ENCODE measurements at regions of chr9 and their contacts with region 1.

Region 1: GRCh38 chr9:76810377-76810957 is 46.2 kb downstream of the PCA3 start:
- DNase-seq: peak; percentile 61
- H3K4me3 ChIP-seq: no peak overlapping the region
- H3K27ac ChIP-seq: no peak overlapping the region
- H3K4me1 ChIP-seq: no peaks in the 10 kb centered on the region
- H3K27me3 ChIP-seq: no peaks in the 10 kb centered on the region
- CTCF ChIP-seq: peak; percentile 70 to 87 (median 71)
- POLR2A ChIP-seq: no peak

Region 2: GRCh38 chr9:76987594-76988200 is 177.2 kb after region 1 on chr9:
- intact Hi-C with region 1: loop called (anchors 10 kb)
- DNase-seq: peak; percentile 41
- H3K4me3 ChIP-seq: no peak overlapping the region
- H3K27ac ChIP-seq: no peak overlapping the region
- H3K4me1 ChIP-seq: peaks cover 5% of the 10 kb centered on the region
- H3K27me3 ChIP-seq: no peaks in the 10 kb centered on the region
- CTCF ChIP-seq: peak in 1 of 3 experiments; percentile 29
- POLR2A ChIP-seq: no peak

Region 3: DNA sequence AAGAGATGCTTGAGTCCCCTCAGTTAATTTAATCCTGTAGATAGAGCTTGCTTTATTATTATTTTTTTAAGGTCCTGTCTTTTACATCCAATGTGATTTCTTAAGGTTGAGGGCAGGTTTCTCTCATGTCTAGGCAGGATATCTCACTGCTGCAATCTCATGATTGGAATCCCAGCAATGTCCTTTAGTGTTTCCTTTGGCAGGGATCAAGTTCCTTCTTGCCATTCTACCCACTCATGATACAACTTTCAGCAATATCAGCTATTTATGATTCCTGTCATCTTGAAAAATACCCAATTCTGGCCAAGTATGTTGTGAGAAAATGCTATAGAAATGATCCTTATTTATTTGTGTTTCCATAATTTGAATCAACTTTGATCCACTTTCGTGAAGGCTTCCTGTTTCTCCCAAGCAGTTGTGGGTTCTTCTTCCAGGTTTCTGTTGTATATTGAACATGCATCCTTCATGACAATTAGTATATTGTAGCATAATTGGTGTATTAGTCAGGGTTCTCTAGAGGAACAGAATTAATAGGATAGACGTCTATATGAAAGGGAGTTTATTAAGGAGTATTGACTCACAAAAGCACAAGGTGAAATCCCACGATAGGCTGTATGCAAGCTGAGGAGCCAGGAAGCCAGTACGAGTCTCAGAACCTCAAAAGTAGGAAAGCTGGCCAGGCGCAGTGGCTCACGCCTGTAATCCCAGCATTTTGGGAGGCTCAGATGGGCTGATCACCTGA is 348.5 kb after region 1 on chr9:
- intact Hi-C with region 1: loop called (anchors 10 kb)
- DNase-seq: no peak
- H3K4me3 ChIP-seq: no peak overlapping the region
- H3K27ac ChIP-seq: no peak overlapping the region
- H3K4me1 ChIP-seq: no peaks in the 10 kb centered on the region
- H3K27me3 ChIP-seq: no peaks in the 10 kb centered on the region
- CTCF ChIP-seq: no peak
- POLR2A ChIP-seq: no peak